CD8-positive, alpha-beta T cell (primary cell): ENCODE measurements at regions of chr5 and their contacts with region 1.

Region 1: GRCh38 chr5:131228646-131229045 is 35.2 kb upstream of the CDC42SE2 start:
- DNase-seq: no peak
- ATAC-seq: no peak
- H3K4me3 ChIP-seq: no peak overlapping the region
- H3K4me3 Mint-ChIP-seq: no peak overlapping the region
- H3K27ac ChIP-seq: no peak overlapping the region
- H3K27ac Mint-ChIP-seq: no peak overlapping the region
- H3K4me1 ChIP-seq: peaks cover 23% of the 10 kb centered on the region
- H3K4me1 Mint-ChIP-seq: peaks cover 19% of the 10 kb centered on the region
- H3K27me3 ChIP-seq: no peaks in the 10 kb centered on the region
- H3K27me3 Mint-ChIP-seq: no peaks in the 10 kb centered on the region
- CTCF ChIP-seq: no peak

Region 2: GRCh38 chr5:131217788-131218187 is 10.9 kb before region 1 on chr5:
- CTCF ChIA-PET with region 1: interaction called, 3 read pairs
- POLR2A ChIA-PET with region 1: interaction called, 3 read pairs
- intact Hi-C with region 1: loop called in 1 of 2 experiments (anchors 1 kb)
- DNase-seq: no peak
- ATAC-seq: no peak
- H3K4me3 ChIP-seq: no peak overlapping the region
- H3K4me3 Mint-ChIP-seq: no peak overlapping the region
- H3K27ac ChIP-seq: no peak overlapping the region
- H3K27ac Mint-ChIP-seq: no peak overlapping the region
- H3K4me1 ChIP-seq: peaks cover 12% of the 10 kb centered on the region
- H3K4me1 Mint-ChIP-seq: peaks cover 26% of the 10 kb centered on the region
- H3K27me3 ChIP-seq: no peaks in the 10 kb centered on the region
- H3K27me3 Mint-ChIP-seq: no peaks in the 10 kb centered on the region
- CTCF ChIP-seq: no peak